Mammary epithelial cell (primary cell): ENCODE measurements at regions of chr22 and their contacts with region 1.

Region 1: GRCh38 chr22:41931701-41932269 is 5.2 kb upstream of the TNFRSF13C start:
- DNase-seq: no peak
- H3K4me3 ChIP-seq: no peak overlapping the region
- H3K27ac ChIP-seq: no peak overlapping the region
- H3K4me1 ChIP-seq: no peaks in the 10 kb centered on the region
- H3K27me3 ChIP-seq: no peaks in the 10 kb centered on the region
- CTCF ChIP-seq: no peak

Region 2: DNA sequence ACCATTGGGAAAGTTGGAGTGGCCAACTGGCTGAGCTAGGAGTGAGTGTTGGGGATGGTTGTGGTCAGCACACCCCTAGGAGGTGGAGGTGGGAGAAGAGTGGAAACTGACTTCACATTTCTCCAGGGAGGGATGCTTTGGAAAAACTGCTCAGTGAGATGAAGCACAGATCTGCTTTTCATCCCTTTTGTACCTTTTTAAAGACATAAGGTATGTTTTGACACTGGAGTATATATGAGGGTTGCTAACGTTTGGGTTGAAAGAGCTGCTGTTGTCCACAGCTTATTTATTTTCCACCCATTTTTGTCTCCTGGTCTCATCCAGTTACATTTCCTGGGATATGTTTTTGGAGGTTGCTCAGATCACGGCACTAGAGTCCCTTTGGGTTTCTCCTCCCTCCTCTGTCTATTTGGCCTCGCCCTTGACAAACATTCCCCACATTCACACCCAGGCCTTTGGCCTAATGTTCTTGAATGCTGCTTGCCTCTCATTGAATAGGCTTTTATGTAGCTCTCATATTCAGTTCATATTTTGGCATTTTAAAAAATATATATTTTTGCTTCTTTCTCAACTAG is 90.6 kb before region 1 on chr22:
- CTCF ChIA-PET with region 1: no interaction called
- dilution Hi-C with region 1: loop called (anchors 5 kb)
- in situ Hi-C with region 1: no loop called
- intact Hi-C with region 1: no loop called
- DNase-seq: no peak
- H3K4me3 ChIP-seq: no peak overlapping the region
- H3K27ac ChIP-seq: peak overlapping the region; percentile 14
- H3K4me1 ChIP-seq: peaks cover 63% of the 10 kb centered on the region
- H3K27me3 ChIP-seq: no peaks in the 10 kb centered on the region
- CTCF ChIP-seq: no peak

Region 3: GRCh38 chr22:41883400-41883799 is 48.4 kb before region 1 on chr22:
- CTCF ChIA-PET with region 1: no interaction called
- dilution Hi-C with region 1: loop called (anchors 5 kb)
- in situ Hi-C with region 1: no loop called
- intact Hi-C with region 1: no loop called
- DNase-seq: no peak
- H3K4me3 ChIP-seq: no peak overlapping the region
- H3K27ac ChIP-seq: no peak overlapping the region
- H3K4me1 ChIP-seq: no peaks in the 10 kb centered on the region
- H3K27me3 ChIP-seq: no peaks in the 10 kb centered on the region
- CTCF ChIP-seq: no peak

Region 4: DNA sequence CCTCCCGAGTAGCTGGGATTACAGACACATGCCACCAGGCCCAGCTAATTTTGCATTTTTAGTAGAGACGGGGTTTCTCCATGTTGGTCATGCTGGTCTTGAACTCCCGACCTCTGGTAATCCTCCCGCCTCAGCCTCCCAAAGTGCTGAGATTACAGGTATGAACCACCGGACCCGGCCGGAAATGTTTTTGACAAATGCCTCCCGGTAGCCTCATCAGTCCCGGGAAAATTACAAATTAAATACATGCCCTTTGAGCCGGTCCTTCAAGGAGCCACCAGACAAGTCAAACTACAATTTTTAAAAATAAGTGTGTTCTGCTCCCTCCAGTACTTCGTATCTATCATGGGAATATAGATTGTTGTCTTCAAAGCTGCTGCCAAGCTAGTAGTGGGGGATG is 84.3 kb after region 1 on chr22:
- CTCF ChIA-PET with region 1: no interaction called
- dilution Hi-C with region 1: loop called (anchors 5 kb)
- in situ Hi-C with region 1: no loop called
- intact Hi-C with region 1: no loop called
- DNase-seq: no peak
- H3K4me3 ChIP-seq: no peak overlapping the region
- H3K27ac ChIP-seq: no peak overlapping the region
- H3K4me1 ChIP-seq: no peaks in the 10 kb centered on the region
- H3K27me3 ChIP-seq: no peaks in the 10 kb centered on the region
- CTCF ChIP-seq: no peak